GM10248 (cell line): ENCODE measurements at regions of chr22 and their contacts with region 1.

Region 1: DNA sequence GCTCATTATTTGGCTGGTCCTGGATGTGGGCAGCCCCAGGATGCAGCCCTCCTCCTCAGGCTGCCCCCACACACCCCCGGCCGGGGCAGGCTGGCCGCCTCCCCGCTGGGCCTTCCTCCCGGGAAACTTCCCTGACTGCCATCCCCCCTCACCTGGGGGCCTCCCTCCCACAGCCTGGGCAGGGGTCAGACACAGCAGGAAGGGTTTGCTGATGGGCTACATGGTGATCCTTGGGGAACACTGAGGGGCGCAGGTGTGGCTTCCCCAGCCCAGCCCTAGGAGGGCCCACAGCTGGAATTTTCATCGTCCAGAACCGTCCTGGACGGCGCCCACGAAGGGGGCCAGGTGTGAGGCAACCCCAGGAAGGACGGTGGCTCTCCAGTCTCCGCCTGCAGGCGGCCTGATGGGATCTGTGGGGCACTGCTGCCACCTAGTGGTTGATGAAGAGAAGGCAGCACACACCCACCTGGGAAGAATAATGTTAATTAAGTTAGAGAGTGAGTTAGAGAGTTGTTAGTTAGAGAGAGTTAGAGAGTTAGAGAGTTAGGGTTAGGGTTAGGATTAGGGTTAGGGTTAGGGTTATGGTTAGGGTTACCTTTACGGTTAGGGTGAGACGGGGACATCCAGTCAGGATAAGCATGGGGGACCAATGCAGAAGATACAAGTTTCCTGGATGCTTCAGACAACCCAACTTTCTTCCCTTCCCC is 75.9 kb upstream of the PRR5 start:
- DNase-seq: peak; percentile 88
- CTCF ChIP-seq: peak; percentile 94

Region 2: DNA sequence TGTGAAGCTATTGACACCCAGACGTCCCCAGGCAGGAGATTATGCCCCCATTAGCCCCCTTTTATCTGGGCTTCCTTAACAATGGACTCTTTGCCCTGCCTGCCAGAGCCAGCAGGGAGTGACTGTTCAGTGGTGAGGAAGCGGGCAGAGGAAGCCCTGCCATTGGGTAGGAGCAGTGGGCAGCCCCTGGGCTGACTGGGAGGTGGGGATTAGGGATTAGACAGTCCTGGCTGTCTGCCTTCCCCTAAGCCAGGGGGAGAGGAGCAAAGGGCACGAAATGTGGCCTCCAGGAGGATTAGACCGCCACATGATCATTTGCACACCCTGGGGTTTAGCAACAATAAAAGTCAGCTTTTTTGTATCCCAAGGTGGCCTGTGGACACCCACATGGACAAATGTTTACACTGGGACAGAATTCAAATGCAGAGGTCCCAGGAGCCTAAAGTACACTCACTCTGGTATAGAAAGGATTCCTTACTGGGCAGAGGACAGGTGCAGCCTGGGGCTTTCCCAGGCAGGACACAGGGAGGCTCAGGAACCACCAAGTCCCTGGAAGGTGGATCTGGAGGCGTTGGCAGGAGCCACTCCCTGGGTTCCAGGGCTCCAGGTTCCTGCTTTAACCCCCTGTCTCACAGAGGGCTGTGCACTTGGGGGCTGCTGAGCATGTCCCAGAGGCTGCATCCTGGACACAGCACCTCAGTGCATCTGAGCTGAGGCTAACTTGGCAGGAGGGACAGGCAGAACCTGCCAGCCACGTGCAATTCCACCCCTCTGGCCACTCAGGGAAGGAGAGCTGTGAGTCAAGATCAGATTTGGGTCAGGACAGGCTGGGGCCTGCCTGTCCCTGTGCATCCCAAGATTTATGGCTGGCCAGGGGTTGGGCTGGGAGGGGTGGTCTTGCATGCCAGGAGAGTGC is 700.4 kb before region 1 on chr22:
- CTCF ChIA-PET with region 1: no interaction called
- POLR2A ChIA-PET with region 1: no interaction called
- DNase-seq: no peak
- CTCF ChIP-seq: no peak

Region 3: GRCh38 chr22:44351685-44352377 is 274.3 kb before region 1 on chr22:
- CTCF ChIA-PET with region 1: no interaction called
- POLR2A ChIA-PET with region 1: no interaction called
- DNase-seq: no peak
- CTCF ChIP-seq: no peak

Region 4: GRCh38 chr22:44648085-44648817 is 22.1 kb after region 1 on chr22:
- CTCF ChIA-PET with region 1: interaction called, 18 read pairs
- POLR2A ChIA-PET with region 1: no interaction called
- DNase-seq: no peak
- CTCF ChIP-seq: no peak